Sigmoid colon (tissue), 7 donors: ENCODE measurements at regions of chr10 and their contacts with region 1.

Region 1: GRCh38 chr10:93437088-93437945 is 44.8 kb downstream of the MYOF start:
- DNase-seq: peak; percentile 98
- H3K4me3 ChIP-seq: peak overlapping the region in 3 of 4 donors; percentile 20 to 28 (median 23)
- H3K27ac ChIP-seq: peak overlapping the region; percentile 98 to 100 (median 100)
- H3K4me1 ChIP-seq: peaks cover 0 to 98% (median 95%) of the 10 kb centered on the region in 4 donors
- H3K27me3 ChIP-seq: no peaks in the 10 kb centered on the region
- CTCF ChIP-seq: no peak
- EP300 ChIP-seq: peak; percentile 65 to 99 (median 88)
- POLR2A ChIP-seq: peak; percentile 20 to 46

Region 2: DNA sequence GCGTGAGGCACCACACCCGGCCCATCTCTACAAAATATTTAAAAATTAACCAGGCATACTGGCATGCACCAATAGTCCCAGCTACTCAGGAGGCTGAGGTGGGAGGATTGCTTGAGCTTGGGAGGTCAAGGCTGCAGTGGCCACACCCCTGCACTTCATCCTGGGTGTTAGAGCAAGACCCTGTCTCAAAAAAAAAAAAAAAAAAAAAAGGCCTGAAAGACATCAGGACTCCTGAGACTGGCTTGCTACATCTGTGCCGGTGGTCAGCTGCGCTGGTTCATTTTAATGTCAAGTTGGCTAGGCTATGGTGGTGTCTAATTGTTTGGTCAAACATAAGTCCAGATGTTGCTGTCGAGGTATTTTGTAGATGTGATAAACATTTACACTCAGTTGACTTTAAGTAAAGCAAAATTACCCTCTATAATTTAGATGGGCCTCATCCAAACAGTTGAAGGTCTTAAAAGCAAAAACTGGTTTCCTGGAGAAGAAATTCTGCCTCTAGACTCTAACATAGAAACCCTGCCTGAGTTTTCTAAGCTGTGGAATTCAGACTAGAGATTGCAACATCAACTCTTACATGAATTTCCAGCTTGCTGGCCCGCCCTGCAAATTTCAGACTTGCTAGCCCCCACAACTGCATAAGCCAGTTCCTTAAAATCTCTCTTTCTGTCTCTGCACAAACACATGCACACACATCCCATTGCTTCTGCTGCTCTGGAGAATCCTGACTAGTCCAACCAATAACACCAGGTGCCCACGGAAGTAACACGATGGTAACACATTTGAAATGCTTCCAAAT is 26.6 kb after region 1 on chr10:
- intact Hi-C with region 1: loop called (anchors 2 kb)
- DNase-seq: peak; percentile 85
- H3K4me3 ChIP-seq: no peak overlapping the region
- H3K27ac ChIP-seq: peak overlapping the region; percentile 89 to 96 (median 92)
- H3K4me1 ChIP-seq: peaks cover 4 to 92% (median 86%) of the 10 kb centered on the region in 4 donors
- H3K27me3 ChIP-seq: no peaks in the 10 kb centered on the region
- CTCF ChIP-seq: no peak
- EP300 ChIP-seq: no peak
- POLR2A ChIP-seq: no peak

Region 3: DNA sequence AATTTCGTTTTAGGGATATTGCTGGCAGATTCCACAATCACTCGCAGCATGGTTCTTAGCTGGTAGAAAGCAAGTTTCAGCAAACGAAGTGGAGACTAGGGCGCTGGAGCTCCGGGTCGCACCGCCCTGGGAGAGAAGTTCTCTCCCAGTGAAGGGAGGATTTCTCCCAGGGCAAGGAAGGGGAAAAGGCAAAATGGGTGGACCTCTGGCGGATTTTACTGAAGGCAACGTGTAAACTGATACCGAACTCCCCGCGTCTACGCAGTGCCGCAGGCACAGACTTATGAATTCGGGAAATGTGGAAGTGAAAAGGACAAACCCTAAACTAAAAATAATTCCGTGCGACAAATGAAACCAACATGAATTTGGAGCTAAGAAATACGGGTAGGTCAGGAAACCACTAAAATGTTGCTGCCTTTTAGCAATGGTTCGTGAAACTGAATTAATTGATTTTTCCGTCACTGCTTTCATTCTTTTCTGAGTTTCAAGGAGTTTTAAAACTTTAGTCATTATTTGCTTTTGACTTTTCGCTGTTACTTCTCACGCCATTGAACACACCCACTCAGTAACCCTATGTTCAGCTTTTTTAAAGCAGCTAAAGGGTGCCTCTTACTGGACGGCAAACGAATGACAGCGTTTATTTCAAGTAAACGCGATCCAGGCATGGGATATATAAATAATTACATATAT is 45.0 kb after region 1 on chr10 and contains the start of gene MYOF:
- intact Hi-C with region 1: loop called (anchors 2 kb)
- DNase-seq: peak; percentile 88
- H3K4me3 ChIP-seq: peak within 1 kb of the TSS; percentile 54 to 65 (median 58)
- H3K27ac ChIP-seq: peak within 1 kb of the TSS; percentile 84 to 95 (median 91)
- H3K4me1 ChIP-seq: peaks cover 0 to 37% (median 28%) of the 10 kb centered on the region in 4 donors
- H3K27me3 ChIP-seq: no peaks in the 10 kb centered on the region
- CTCF ChIP-seq: peak; percentile 32 to 64 (median 54)
- EP300 ChIP-seq: no peak
- POLR2A ChIP-seq: peak; percentile 78 to 91
- total RNA-seq, gene MYOF: 33.6 to 83.4 (median 70.2) TPM